ENCODE measurements at regions of chr1 and their contacts with region 1.

Region 1: DNA sequence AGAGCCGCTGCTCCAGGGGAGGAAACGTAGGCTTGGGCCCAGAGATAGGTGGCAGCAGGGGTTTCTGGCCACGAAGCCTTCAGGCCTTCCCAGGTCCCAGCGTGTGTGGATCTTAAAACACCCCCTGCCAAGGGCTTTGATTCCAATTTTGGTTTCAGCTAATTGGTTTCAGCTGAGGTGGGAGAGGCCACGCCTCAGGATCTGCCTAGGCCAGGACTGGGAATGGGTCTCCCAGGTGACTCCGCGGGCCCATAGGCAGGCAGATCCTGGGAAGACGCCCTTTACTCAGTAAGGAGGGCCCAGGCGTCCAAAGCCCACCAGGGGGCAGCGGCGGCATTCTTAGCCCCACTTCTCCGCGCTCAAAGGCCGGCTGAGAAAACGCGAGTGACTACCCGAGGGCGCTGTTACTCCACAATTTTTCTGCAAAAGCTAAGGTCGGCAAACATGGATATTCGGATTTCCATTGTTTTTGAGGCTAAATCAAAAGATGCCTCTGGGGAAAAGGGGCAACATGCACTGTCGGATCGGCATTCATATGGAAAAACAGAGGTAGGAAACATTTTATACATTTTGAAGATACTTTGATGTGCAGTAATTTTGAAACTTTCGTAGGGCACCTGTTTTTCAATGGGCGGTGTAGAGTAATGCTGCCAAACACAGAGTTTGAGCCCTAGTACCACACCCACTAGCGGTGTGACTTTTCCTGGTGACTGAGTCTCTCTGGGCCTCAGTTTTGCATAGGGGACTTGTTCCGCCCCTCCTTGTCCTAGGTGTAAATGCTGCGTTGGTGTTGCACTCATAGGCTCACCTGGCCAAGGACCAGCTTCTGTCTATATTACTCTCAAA is 31.8 kb upstream of the BCL10 start:
- DNase-seq: peak; percentile 91
- H3K4me3 ChIP-seq: no peak overlapping the region
- H3K27ac ChIP-seq: peak overlapping the region; percentile 44
- H3K4me1 ChIP-seq: peaks cover 21% of the 10 kb centered on the region
- H3K27me3 ChIP-seq: no peaks in the 10 kb centered on the region
- CTCF ChIP-seq: peak; percentile 99
- POLR2A ChIP-seq: no peak

Region 2: DNA sequence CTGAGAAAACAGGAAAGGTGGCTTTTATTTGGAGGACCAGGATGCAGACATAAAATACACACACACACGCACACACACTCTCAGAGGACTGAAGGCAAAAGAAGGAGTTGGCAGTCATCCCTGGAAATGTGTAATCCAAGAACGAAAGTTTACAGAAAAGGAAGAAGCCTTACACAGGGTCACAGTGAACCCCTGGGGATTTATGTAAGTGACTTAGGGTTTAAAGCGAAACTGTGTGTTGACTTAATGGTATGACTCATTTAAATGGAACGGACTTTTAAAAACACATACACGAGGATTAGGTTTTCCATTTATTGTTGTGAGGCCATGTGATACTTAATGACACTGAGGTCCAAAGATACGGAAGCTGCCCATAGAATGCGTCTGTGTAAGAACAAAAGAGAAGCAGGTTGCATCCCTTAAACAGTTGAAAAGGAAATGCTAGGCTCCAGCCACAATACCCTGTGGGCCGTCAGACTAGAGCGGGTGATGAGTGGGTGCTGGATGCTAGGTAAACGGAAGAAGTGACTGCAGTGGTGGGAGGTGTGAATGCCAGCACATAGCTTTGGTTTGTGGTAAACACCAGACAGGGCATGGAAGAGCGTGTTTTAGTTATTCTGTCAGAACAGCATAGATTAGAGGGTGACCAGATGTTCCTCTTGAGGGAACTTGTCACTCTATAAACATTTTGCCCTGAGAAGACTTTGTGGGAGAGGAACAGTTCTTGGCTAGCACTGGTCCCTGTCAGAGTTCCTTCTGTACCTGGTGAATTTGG is 10.2 kb before region 1 on chr1:
- CTCF ChIA-PET with region 1: interaction called, 13 read pairs
- POLR2A ChIA-PET with region 1: no interaction called
- dilution Hi-C with region 1: no loop called
- intact Hi-C with region 1: no loop called
- DNase-seq: peak; percentile 100
- H3K4me3 ChIP-seq: no peak overlapping the region
- H3K27ac ChIP-seq: peak overlapping the region; percentile 95
- H3K4me1 ChIP-seq: peaks cover 43% of the 10 kb centered on the region
- H3K27me3 ChIP-seq: no peaks in the 10 kb centered on the region
- CTCF ChIP-seq: no peak
- POLR2A ChIP-seq: peak; percentile 55

Region 3: GRCh38 chr1:85339089-85339488 is 30.9 kb after region 1 on chr1:
- CTCF ChIA-PET with region 1: interaction called, 54 read pairs
- POLR2A ChIA-PET with region 1: interaction called, 6 read pairs
- dilution Hi-C with region 1: no loop called
- intact Hi-C with region 1: loop called (anchors 1 kb)
- DNase-seq: peak; percentile 90
- H3K4me3 ChIP-seq: no peak overlapping the region
- H3K27ac ChIP-seq: peak overlapping the region; percentile 99
- H3K4me1 ChIP-seq: peaks cover 72% of the 10 kb centered on the region
- H3K27me3 ChIP-seq: no peaks in the 10 kb centered on the region
- CTCF ChIP-seq: no peak
- POLR2A ChIP-seq: no peak

Region 4: DNA sequence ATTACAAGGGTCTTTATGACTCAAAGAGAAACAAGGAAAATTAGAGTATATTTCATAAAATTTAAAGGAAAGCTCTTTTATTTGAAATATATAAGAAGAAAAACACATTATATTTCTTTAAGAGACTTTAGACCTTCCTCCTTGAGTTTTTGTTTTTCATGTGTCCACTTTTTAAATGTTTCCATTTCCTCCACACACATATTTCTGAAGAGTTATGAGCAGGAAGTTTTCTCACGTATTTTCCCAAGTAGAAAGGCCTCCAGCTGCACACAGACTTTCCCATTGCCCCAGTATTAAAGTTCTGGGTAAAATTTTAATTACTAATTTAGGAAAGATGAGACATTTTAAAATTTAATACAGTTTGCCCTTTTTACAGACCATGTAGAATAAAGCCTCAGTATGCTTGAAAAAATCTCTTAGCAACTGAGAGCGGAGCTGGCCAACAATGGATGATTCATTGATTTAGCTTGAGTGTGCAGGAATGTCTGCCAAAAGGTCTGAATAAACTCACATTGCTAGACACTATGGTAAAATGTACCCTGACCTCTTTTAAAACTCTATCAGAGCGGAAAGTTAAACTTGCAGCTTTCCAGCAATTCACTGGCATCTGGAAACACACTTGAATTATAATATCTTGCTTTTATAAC is 98.8 kb after region 1 on chr1:
- CTCF ChIA-PET with region 1: interaction called, 16 read pairs
- POLR2A ChIA-PET with region 1: no interaction called
- dilution Hi-C with region 1: no loop called
- intact Hi-C with region 1: loop called (anchors 2 kb)
- DNase-seq: peak; percentile 96
- H3K4me3 ChIP-seq: peak overlapping the region in 1 of 3 experiments; percentile 46
- H3K27ac ChIP-seq: peak overlapping the region; percentile 91
- H3K4me1 ChIP-seq: peaks cover 32% of the 10 kb centered on the region
- H3K27me3 ChIP-seq: no peaks in the 10 kb centered on the region
- CTCF ChIP-seq: no peak
- POLR2A ChIP-seq: no peak

Region 5: GRCh38 chr1:85484264-85484663 is 176.1 kb after region 1 on chr1:
- CTCF ChIA-PET with region 1: interaction called, 11 read pairs
- POLR2A ChIA-PET with region 1: no interaction called
- dilution Hi-C with region 1: no loop called
- intact Hi-C with region 1: no loop called
- DNase-seq: no peak
- H3K4me3 ChIP-seq: no peak overlapping the region
- H3K27ac ChIP-seq: no peak overlapping the region
- H3K4me1 ChIP-seq: peaks cover 4% of the 10 kb centered on the region
- H3K27me3 ChIP-seq: no peaks in the 10 kb centered on the region
- CTCF ChIP-seq: no peak
- POLR2A ChIP-seq: no peak

Region 6: DNA sequence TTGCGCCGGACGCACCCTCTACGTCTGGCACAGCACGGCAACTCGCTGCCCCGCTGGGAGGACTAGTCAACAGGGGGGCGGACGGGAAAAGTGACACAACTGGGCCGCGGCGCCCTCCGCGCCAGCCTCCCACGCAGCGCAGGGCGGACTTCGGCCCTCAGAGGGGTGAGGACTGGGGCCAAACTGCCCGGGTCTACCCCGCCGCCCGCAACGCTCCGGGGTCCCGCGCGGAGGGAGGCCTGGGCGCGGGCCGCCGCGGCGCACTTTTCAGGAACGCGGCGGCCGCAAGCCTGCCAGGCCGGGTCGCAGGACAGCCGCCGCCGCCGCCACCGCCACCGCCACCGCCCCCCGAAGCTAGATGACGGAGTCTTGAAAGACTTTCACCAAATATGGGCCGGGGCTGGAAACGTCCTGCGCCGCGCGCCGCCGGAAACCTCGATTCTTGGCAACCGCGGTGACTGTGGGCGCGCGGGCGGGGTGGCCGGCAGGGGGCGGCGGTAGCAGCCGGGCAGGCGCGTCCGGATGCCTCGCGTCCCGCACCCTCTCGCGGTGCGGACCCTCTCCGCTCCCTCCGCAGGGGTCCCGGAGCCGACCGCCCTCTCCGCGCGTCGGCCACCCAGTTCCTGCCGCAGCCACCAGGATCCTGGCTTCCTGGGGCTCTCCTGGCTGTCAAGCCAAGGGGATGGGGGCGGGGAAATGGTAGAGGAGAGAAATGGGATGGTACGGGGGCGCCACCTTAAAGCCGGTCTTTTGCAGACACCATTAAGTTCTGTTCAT is 268.6 kb after region 1 on chr1:
- CTCF ChIA-PET with region 1: interaction called, 37 read pairs
- POLR2A ChIA-PET with region 1: interaction called, 10 read pairs
- dilution Hi-C with region 1: no loop called
- intact Hi-C with region 1: loop called (anchors 1 kb)
- DNase-seq: peak; percentile 87
- H3K4me3 ChIP-seq: peak overlapping the region; percentile 67 to 93 (median 80)
- H3K27ac ChIP-seq: peak overlapping the region; percentile 98
- H3K4me1 ChIP-seq: peaks cover 55% of the 10 kb centered on the region
- H3K27me3 ChIP-seq: no peaks in the 10 kb centered on the region
- CTCF ChIP-seq: peak; percentile 69 to 83
- POLR2A ChIP-seq: peak; percentile 17

Region 7: GRCh38 chr1:85911742-85912141 is 603.5 kb after region 1 on chr1:
- CTCF ChIA-PET with region 1: interaction called, 7 read pairs
- POLR2A ChIA-PET with region 1: no interaction called
- dilution Hi-C with region 1: no loop called
- intact Hi-C with region 1: loop called (anchors 10 kb)
- DNase-seq: peak; percentile 9
- H3K4me3 ChIP-seq: no peak overlapping the region
- H3K27ac ChIP-seq: no peak overlapping the region
- H3K4me1 ChIP-seq: no peaks in the 10 kb centered on the region
- H3K27me3 ChIP-seq: peaks cover 1 to 30% of the 10 kb centered on the region in 2 experiments
- CTCF ChIP-seq: peak in 1 of 2 donors; percentile 24
- POLR2A ChIP-seq: no peak

Region 8: DNA sequence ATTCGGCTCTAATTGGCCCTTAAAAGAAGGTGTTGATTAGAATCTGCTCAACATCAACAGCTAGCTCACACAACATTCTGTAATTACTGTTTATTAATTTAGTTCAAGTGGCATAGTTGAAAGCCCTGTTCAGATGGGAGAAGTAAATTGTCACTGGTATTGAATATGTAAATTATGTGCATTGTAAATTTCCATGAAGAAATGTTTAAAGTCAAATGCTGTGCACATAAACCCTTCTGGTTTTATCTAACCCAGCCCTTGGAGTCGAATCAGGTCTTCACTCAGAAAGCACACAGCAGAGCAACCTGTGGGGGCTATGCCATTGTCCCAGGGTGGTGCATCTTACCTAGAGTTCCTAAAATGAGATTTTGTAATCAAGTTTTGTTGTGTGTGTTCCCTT is 1955.1 kb after region 1 on chr1:
- CTCF ChIA-PET with region 1: no interaction called
- POLR2A ChIA-PET with region 1: no interaction called
- dilution Hi-C with region 1: no loop called
- intact Hi-C with region 1: no loop called
- DNase-seq: no peak
- H3K4me3 ChIP-seq: no peak overlapping the region
- H3K27ac ChIP-seq: no peak overlapping the region
- H3K4me1 ChIP-seq: no peaks in the 10 kb centered on the region
- H3K27me3 ChIP-seq: no peaks in the 10 kb centered on the region
- CTCF ChIP-seq: no peak
- POLR2A ChIP-seq: no peak